ENCODE measurements at regions of chr19 and their contacts with region 1.

Region 1: DNA sequence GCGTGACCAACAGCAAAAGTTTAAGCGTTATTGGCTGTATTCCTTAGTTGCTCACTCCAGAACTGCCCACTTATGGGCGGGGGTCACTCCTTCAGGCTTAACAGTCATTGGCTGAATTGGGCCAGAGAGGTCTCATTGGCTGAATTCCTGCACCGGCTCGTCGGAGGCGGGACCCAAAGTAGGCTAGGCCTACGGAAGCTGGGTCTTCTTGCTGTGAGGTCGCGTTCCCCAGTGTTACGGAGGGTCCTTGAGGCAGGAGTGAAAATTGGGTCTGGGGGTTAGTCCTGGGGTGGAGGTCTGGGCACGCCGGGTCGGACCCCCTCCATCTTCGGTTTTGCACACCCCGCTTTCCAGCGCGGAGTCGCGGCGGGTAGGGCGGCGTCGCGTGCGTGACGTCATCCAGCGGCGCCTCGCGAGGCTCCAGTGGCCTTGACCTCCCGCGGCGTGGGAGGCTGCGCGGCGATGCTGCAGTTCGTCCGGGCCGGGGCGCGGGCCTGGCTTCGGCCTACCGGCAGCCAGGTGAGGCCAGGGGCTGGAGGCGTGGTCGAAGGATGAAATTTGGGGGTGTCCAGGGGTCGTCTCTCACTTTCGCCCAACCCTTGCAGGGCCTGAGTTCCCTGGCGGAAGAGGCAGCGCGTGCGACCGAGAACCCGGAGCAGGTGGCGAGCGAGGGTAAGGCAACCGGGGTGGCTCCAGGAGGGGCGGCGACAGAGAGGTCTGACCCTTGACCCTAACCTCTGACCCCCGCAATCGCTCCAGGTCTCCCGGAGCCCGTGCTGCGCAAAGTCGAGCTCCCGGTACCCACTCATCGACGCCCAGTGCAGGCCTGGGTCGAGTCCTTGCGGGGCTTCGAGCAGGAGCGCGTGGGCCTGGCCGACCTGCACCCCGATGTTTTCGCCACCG is at the start of gene MRPL4:
- DNase-seq: peak; percentile 95 to 97
- H3K4me3 ChIP-seq: peak within 1 kb of the TSS; percentile 93
- H3K4me3 Mint-ChIP-seq: peak within 1 kb of the TSS; percentile 93
- H3K27ac Mint-ChIP-seq: peak within 1 kb of the TSS; percentile 94
- H3K4me1 ChIP-seq: peaks cover 4% of the 10 kb centered on the region; the same call in 1 of the 2 replicates
- H3K4me1 Mint-ChIP-seq: no peaks in the 10 kb centered on the region
- H3K27me3 ChIP-seq: no peaks in the 10 kb centered on the region
- H3K27me3 Mint-ChIP-seq: no peaks in the 10 kb centered on the region
- CTCF ChIP-seq: no peak
- total RNA-seq, gene MRPL4: 85.9 and 87.4 TPM in 2 replicates

Region 2: DNA sequence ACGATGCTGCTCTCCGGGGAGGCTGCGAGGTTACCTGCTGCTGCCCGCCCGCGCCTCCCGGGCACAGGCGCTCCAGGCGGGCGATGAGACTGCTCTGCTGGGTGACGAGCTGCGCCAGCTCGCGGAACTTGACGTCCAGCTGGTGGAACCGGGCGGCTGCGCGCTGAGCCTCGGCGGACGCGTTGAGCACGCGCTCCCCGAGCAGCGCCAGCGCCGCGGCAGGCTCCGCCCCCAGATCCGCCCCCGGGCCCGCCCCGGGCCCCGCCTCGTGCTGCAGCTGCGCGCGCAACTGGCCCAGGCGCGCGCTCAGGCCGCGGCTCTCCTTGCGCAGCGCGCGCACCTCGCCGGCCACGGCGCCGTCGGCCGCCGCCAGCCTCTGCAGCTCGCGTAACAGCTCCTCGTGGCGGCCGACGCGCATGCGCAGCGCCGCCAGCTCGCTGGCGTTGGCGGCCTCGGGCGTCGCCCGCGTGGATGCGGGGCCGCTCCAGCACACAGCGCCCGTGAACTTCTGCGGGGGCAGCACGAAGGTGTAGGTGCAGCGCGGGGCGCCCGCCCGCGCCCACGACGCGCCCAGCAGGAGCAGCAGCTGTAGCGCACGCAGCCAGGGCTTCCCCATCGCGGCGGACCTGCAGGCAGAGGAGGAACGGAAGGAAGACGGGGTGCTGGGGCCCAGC is 156.0 kb before region 1 on chr19:
- CTCF ChIA-PET with region 1: interaction called, 3 read pairs
- POLR2A ChIA-PET with region 1: interaction called, 3 read pairs
- intact Hi-C with region 1: loop called (anchors 1 kb)
- DNase-seq: peak; percentile 85 to 94
- H3K4me3 ChIP-seq: peak overlapping the region; percentile 54
- H3K4me3 Mint-ChIP-seq: peak overlapping the region; percentile 67
- H3K27ac Mint-ChIP-seq: no peak overlapping the region
- H3K4me1 ChIP-seq: no peaks in the 10 kb centered on the region
- H3K4me1 Mint-ChIP-seq: no peaks in the 10 kb centered on the region
- H3K27me3 ChIP-seq: no peaks in the 10 kb centered on the region
- H3K27me3 Mint-ChIP-seq: peaks cover 2% of the 10 kb centered on the region
- CTCF ChIP-seq: no peak

Region 3: DNA sequence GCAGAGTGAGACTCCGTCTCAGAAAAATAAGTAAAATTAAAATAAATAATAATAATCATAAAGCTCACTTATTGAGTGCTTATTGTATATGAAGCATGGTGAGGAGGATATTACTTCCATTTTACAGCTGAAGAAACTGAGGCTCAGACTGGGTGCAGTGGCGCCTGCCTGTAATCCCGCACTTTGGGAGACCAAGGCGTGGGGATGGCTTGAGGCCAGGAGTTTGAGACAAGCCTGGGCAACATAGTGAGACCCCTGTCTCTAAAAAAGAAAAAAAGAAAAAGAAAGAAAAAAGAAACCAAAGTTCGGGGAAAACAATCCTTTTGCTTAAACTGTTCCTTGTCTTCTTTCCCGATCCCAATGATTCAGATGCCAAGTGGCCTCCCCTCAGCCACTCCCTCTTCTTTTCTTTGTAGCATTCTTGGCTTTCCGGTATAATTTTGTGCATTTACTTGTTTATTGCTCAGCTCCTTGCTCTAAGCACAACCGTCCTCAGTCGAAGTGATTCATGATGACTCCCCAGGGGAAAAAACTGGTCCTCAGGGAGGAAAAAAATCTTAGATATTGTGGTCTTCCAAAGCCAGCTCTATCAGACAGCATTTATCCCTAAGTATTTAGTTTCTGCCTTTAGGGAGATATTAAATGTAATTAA is 131.4 kb before region 1 on chr19:
- CTCF ChIA-PET with region 1: no interaction called
- POLR2A ChIA-PET with region 1: no interaction called
- intact Hi-C with region 1: loop called (anchors 1 kb)
- DNase-seq: no peak
- H3K4me3 ChIP-seq: no peak overlapping the region
- H3K4me3 Mint-ChIP-seq: no peak overlapping the region
- H3K27ac Mint-ChIP-seq: no peak overlapping the region
- H3K4me1 ChIP-seq: no peaks in the 10 kb centered on the region
- H3K4me1 Mint-ChIP-seq: no peaks in the 10 kb centered on the region
- H3K27me3 ChIP-seq: no peaks in the 10 kb centered on the region
- H3K27me3 Mint-ChIP-seq: no peaks in the 10 kb centered on the region
- CTCF ChIP-seq: no peak

Region 4: GRCh38 chr19:10194500-10195289 is 57.3 kb before region 1 on chr19 and contains the start of gene DNMT1:
- CTCF ChIA-PET with region 1: no interaction called
- POLR2A ChIA-PET with region 1: no interaction called
- intact Hi-C with region 1: loop called (anchors 5 kb)
- DNase-seq: peak; percentile 97 to 98
- H3K4me3 ChIP-seq: peak within 1 kb of the TSS; percentile 91
- H3K4me3 Mint-ChIP-seq: peak within 1 kb of the TSS; percentile 96
- H3K27ac Mint-ChIP-seq: peak within 1 kb of the TSS; percentile 88
- H3K4me1 ChIP-seq: no peaks in the 10 kb centered on the region
- H3K4me1 Mint-ChIP-seq: no peaks in the 10 kb centered on the region
- H3K27me3 ChIP-seq: no peaks in the 10 kb centered on the region
- H3K27me3 Mint-ChIP-seq: no peaks in the 10 kb centered on the region
- CTCF ChIP-seq: no peak
- total RNA-seq, gene DNMT1: 144 and 171 TPM in 2 replicates

Region 5: GRCh38 chr19:10230861-10231611 is 21.0 kb before region 1 on chr19 and contains the start of gene S1PR2:
- CTCF ChIA-PET with region 1: interaction called, 8 read pairs
- POLR2A ChIA-PET with region 1: interaction called, 3 read pairs
- intact Hi-C with region 1: loop called (anchors 1 kb)
- DNase-seq: peak; percentile 85 to 86
- H3K4me3 ChIP-seq: peak within 1 kb of the TSS; percentile 83
- H3K4me3 Mint-ChIP-seq: peak within 1 kb of the TSS; percentile 72
- H3K27ac Mint-ChIP-seq: peak within 1 kb of the TSS; percentile 59
- H3K4me1 ChIP-seq: 0 out of 2 replicates have a peak, but pooled peaks cover 6% of the 10 kb centered on the region
- H3K4me1 Mint-ChIP-seq: no peaks in the 10 kb centered on the region
- H3K27me3 ChIP-seq: no peaks in the 10 kb centered on the region
- H3K27me3 Mint-ChIP-seq: no peaks in the 10 kb centered on the region
- CTCF ChIP-seq: no peak
- total RNA-seq, gene S1PR2: 6.2 and 7.2 TPM in 2 replicates

Region 6: GRCh38 chr19:10279737-10280442 is 27.8 kb after region 1 on chr19:
- CTCF ChIA-PET with region 1: no interaction called
- POLR2A ChIA-PET with region 1: no interaction called
- intact Hi-C with region 1: no loop called
- DNase-seq: no peak
- H3K4me3 ChIP-seq: no peak overlapping the region
- H3K4me3 Mint-ChIP-seq: no peak overlapping the region
- H3K27ac Mint-ChIP-seq: peak overlapping the region; percentile 63
- H3K4me1 ChIP-seq: peaks cover 20% of the 10 kb centered on the region
- H3K4me1 Mint-ChIP-seq: peaks cover 7% of the 10 kb centered on the region
- H3K27me3 ChIP-seq: no peaks in the 10 kb centered on the region
- H3K27me3 Mint-ChIP-seq: no peaks in the 10 kb centered on the region
- CTCF ChIP-seq: no peak

Measured in Caco-2 (cell line).